ENCODE measurements at regions of chr7 and their contacts with region 1.

Region 1: DNA sequence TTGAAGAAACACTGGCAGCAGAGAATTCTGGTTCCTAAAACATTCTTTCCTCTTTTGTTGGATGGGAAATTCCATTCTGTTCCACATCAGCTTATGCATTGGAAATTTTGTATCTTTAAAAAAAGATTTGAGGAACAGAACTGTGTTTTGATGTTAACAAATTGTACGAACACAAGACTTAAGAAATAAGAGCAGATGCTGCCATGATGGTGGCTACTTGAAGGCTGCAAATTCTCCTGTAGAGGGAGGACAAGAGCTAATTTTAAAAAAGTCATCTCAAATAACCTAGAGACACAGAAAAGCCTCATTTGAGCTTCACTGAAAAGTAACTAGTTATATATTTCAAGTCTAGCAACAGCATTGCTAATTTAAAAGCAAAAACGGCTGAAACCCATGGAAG is 29.8 kb downstream of the NDUFB2 start:
- DNase-seq: peak; percentile 34
- ATAC-seq: peak; percentile 67
- H3K4me3 ChIP-seq: no peak overlapping the region
- H3K27ac ChIP-seq: no peak overlapping the region
- H3K4me1 ChIP-seq: no peaks in the 10 kb centered on the region
- H3K27me3 ChIP-seq: no peaks in the 10 kb centered on the region
- CTCF ChIP-seq: peak; percentile 67

Region 2: DNA sequence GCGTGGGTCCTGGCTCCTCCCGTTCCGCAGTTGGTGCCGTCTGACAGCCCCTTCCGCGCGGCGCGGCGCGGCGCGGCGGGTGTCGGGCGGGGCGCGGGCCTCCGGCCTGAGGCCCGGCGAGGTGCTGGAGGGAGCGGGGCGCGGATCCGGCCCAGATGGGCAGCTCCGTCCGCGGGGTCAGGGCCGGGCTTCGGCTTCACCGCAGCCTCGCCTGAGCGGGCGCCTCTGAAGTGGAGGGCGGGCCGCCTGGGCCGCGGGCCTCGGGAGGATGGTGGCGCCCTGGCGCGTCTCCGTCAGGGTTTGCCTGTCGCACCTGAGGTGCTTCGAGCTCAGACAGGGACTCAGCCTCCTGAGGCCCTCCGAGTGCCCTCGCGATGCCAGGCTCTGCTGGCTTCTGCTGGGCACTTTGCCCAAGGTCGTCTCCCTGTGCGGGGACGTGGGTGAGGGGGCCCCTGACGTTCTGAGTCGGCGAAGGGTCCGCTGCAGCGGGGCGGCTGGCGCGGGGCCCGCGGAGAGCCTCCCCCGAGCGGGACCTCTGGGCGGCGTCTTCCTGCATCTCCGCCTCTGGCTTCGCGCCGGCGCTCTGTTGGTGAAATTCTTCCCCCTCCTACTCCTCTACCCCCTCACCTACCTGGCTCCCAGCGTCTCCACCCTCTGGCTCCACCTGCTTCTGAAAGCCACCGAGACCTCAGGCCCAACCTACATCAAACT is 53.1 kb before region 1 on chr7:
- CTCF ChIA-PET with region 1: no interaction called
- POLR2A ChIA-PET with region 1: no interaction called
- intact Hi-C with region 1: no loop called
- DNase-seq: peak; percentile 82
- ATAC-seq: peak; percentile 71
- H3K4me3 ChIP-seq: peak overlapping the region; percentile 71
- H3K27ac ChIP-seq: peak overlapping the region; percentile 33; the same call in 1 of the 2 replicates
- H3K4me1 ChIP-seq: peaks cover 25% of the 10 kb centered on the region
- H3K27me3 ChIP-seq: no peaks in the 10 kb centered on the region
- CTCF ChIP-seq: no peak; the same call in 1 of the 2 replicates

Region 3: GRCh38 chr7:140867467-140868462 is 141.5 kb after region 1 on chr7:
- CTCF ChIA-PET with region 1: no interaction called
- POLR2A ChIA-PET with region 1: no interaction called
- intact Hi-C with region 1: no loop called
- DNase-seq: no peak
- ATAC-seq: no peak
- H3K4me3 ChIP-seq: no peak overlapping the region
- H3K27ac ChIP-seq: no peak overlapping the region
- H3K4me1 ChIP-seq: no peaks in the 10 kb centered on the region
- H3K27me3 ChIP-seq: no peaks in the 10 kb centered on the region
- CTCF ChIP-seq: no peak

Region 4: GRCh38 chr7:140998715-140999114 is 272.4 kb after region 1 on chr7:
- CTCF ChIA-PET with region 1: no interaction called
- POLR2A ChIA-PET with region 1: no interaction called
- intact Hi-C with region 1: loop called (anchors 5 kb)
- DNase-seq: no peak
- ATAC-seq: no peak
- H3K4me3 ChIP-seq: no peak overlapping the region
- H3K27ac ChIP-seq: no peak overlapping the region
- H3K4me1 ChIP-seq: no peaks in the 10 kb centered on the region
- H3K27me3 ChIP-seq: 0 out of 2 replicates have a peak, but pooled peaks cover 5% of the 10 kb centered on the region
- CTCF ChIP-seq: no peak